ENCODE measurements at regions of chr17 and their contacts with region 1.

Region 1: DNA sequence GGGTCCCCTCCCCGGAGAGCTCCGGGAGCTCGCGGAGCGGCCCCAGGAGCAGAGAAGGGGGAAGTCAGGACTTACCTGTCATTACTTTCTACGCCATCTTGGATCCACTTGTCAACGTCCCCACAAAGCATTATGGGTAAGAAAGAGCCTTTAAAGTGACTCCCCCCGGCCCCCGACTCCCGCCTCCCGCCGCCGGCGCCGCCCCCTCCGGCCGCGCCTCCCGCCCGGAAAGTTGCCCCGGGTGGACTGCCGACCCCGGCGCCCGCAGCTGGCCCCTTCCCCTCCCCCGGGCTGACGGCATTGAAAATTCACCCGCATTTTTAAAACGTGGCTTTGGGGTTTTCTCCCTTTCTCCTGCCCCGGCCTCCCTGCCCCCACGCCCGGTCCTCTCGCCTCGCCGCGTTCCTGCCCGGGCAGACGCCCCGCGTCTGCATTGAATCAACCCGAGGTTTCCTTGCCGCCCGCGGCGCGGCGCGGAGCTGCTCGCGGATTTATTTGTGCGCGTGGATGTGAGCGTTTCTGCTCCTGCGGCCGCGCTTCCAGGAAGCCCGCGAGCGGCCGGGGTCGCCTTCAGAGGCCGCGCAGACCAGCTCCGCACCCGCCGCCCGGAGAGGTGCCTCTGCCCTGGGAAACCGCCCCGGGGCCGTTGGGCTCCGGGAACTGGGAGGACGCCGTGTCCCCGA is at the start of gene HELZ:
- DNase-seq: peak; percentile 85
- H3K4me3 ChIP-seq: peak within 1 kb of the TSS; percentile 92 to 98 (median 96)
- H3K27ac ChIP-seq: peak within 1 kb of the TSS; percentile 71
- H3K4me1 ChIP-seq: peaks cover 20% of the 10 kb centered on the region
- H3K27me3 ChIP-seq: no peaks in the 10 kb centered on the region
- CTCF ChIP-seq: no peak
- POLR2A ChIP-seq: peak; percentile 71
- total RNA-seq, gene HELZ: 47.3 and 47.5 TPM in 2 replicates

Region 2: GRCh38 chr17:66799849-66800537 is 445.2 kb before region 1 on chr17:
- CTCF ChIA-PET with region 1: no interaction called
- POLR2A ChIA-PET with region 1: no interaction called
- dilution Hi-C with region 1: no loop called
- intact Hi-C with region 1: loop called (anchors 5 kb)
- DNase-seq: peak; percentile 3
- H3K4me3 ChIP-seq: no peak overlapping the region
- H3K27ac ChIP-seq: no peak overlapping the region
- H3K4me1 ChIP-seq: no peaks in the 10 kb centered on the region
- H3K27me3 ChIP-seq: no peaks in the 10 kb centered on the region
- CTCF ChIP-seq: no peak
- POLR2A ChIP-seq: no peak

Region 3: GRCh38 chr17:67183531-67183930 is 61.7 kb before region 1 on chr17:
- CTCF ChIA-PET with region 1: no interaction called
- POLR2A ChIA-PET with region 1: no interaction called
- dilution Hi-C with region 1: no loop called
- intact Hi-C with region 1: no loop called
- DNase-seq: peak; percentile 3
- H3K4me3 ChIP-seq: no peak overlapping the region
- H3K27ac ChIP-seq: no peak overlapping the region
- H3K4me1 ChIP-seq: peaks cover 6% of the 10 kb centered on the region
- H3K27me3 ChIP-seq: no peaks in the 10 kb centered on the region
- CTCF ChIP-seq: no peak
- POLR2A ChIP-seq: no peak

Region 4: GRCh38 chr17:67200720-67201301 is 44.4 kb before region 1 on chr17:
- CTCF ChIA-PET with region 1: no interaction called
- POLR2A ChIA-PET with region 1: no interaction called
- dilution Hi-C with region 1: no loop called
- intact Hi-C with region 1: no loop called
- DNase-seq: no peak
- H3K4me3 ChIP-seq: no peak overlapping the region
- H3K27ac ChIP-seq: no peak overlapping the region
- H3K4me1 ChIP-seq: no peaks in the 10 kb centered on the region
- H3K27me3 ChIP-seq: no peaks in the 10 kb centered on the region
- CTCF ChIP-seq: peak; percentile 30 to 31
- POLR2A ChIP-seq: no peak

Region 5: GRCh38 chr17:67258821-67259468 is 13.7 kb after region 1 on chr17:
- CTCF ChIA-PET with region 1: interaction called, 5 read pairs
- POLR2A ChIA-PET with region 1: no interaction called
- dilution Hi-C with region 1: no loop called
- intact Hi-C with region 1: loop called (anchors 1 kb)
- DNase-seq: no peak
- H3K4me3 ChIP-seq: no peak overlapping the region
- H3K27ac ChIP-seq: no peak overlapping the region
- H3K4me1 ChIP-seq: peaks cover 17% of the 10 kb centered on the region
- H3K27me3 ChIP-seq: no peaks in the 10 kb centered on the region
- CTCF ChIP-seq: no peak
- POLR2A ChIP-seq: no peak

Region 6: GRCh38 chr17:67293251-67294203 is 48.3 kb after region 1 on chr17:
- CTCF ChIA-PET with region 1: interaction called, 9 read pairs
- POLR2A ChIA-PET with region 1: no interaction called
- dilution Hi-C with region 1: no loop called
- intact Hi-C with region 1: loop called (anchors 5 kb)
- DNase-seq: peak; percentile 54
- H3K4me3 ChIP-seq: no peak overlapping the region
- H3K27ac ChIP-seq: no peak overlapping the region
- H3K4me1 ChIP-seq: peaks cover 7% of the 10 kb centered on the region
- H3K27me3 ChIP-seq: no peaks in the 10 kb centered on the region
- CTCF ChIP-seq: peak; percentile 60 to 83
- POLR2A ChIP-seq: no peak

Region 7: GRCh38 chr17:67366193-67367157 is 121.3 kb after region 1 on chr17 and contains the start of gene PSMD12:
- CTCF ChIA-PET with region 1: no interaction called
- POLR2A ChIA-PET with region 1: no interaction called
- dilution Hi-C with region 1: no loop called
- intact Hi-C with region 1: loop called (anchors 5 kb)
- DNase-seq: peak; percentile 92
- H3K4me3 ChIP-seq: peak within 1 kb of the TSS; percentile 60 to 93 (median 64)
- H3K27ac ChIP-seq: peak within 1 kb of the TSS; percentile 80
- H3K4me1 ChIP-seq: peaks cover 14% of the 10 kb centered on the region
- H3K27me3 ChIP-seq: no peaks in the 10 kb centered on the region
- CTCF ChIP-seq: no peak
- POLR2A ChIP-seq: peak; percentile 76
- total RNA-seq, gene PSMD12: 69.8 and 73.0 TPM in 2 replicates

Measured in endothelial cell of umbilical vein (primary cell).